ENCODE measurements at regions of chr11 and their contacts with region 1.

Region 1: DNA sequence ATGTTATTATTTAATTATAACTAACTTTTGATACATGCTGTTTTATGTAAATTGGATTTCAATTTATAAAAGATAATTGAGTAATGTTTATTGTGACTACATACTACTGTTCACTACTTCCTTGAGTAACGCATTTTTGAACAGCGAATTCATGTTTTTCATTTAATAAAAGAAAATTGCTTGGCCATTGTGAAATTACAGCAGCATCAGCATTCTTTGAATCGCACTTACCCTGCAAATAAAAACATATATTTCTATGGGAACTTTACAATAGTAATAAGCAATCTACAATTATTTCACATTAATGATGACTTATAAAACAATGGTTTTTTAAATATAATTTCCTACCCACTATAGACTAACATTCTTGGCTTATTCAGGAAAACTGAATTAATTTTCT is 20.3 kb downstream of the OR5J2 start:
- DNase-seq: no peak
- ATAC-seq: no peak
- H3K4me3 ChIP-seq: no peak overlapping the region
- H3K4me3 Mint-ChIP-seq: no peak overlapping the region
- H3K27ac ChIP-seq: no peak overlapping the region
- H3K27ac Mint-ChIP-seq: no peak overlapping the region
- H3K4me1 ChIP-seq: no peaks in the 10 kb centered on the region
- H3K4me1 Mint-ChIP-seq: no peaks in the 10 kb centered on the region
- H3K27me3 ChIP-seq: no peaks in the 10 kb centered on the region
- H3K27me3 Mint-ChIP-seq: no peaks in the 10 kb centered on the region
- CTCF ChIP-seq: no peak

Region 2: DNA sequence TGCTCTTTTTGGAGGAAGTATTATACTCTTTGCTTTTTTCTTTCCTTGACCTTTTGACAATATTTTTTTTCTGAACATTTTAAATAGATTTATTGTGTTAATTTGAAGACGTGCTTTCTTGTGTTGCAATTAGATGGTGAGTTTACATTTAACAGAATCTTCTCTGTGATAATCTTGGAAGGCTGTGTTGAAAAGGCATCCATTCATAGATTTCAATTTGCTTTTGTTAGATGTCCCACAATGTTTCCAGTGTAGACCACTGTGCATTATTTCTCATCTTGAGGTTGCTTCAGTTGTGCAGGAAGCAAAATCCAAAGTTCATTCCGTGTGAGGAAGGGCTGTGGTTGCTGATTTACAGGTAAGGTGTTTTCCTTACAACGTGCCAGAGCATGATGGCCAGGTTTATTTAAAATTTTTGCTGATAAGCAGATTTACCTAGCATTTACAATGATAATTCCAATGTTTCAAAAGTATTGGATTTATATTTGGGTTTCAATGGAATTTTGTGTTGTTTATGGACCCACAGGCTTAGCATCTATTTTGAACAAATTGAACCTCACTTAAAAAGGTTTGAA is 24.4 kb before region 1 on chr11:
- CTCF ChIA-PET with region 1: no interaction called
- POLR2A ChIA-PET with region 1: no interaction called
- intact Hi-C with region 1: loop called in 1 of 2 experiments (anchors 1 kb)
- DNase-seq: no peak
- ATAC-seq: no peak
- H3K4me3 ChIP-seq: no peak overlapping the region
- H3K4me3 Mint-ChIP-seq: no peak overlapping the region
- H3K27ac ChIP-seq: no peak overlapping the region
- H3K27ac Mint-ChIP-seq: no peak overlapping the region
- H3K4me1 ChIP-seq: no peaks in the 10 kb centered on the region
- H3K4me1 Mint-ChIP-seq: no peaks in the 10 kb centered on the region
- H3K27me3 ChIP-seq: no peaks in the 10 kb centered on the region
- H3K27me3 Mint-ChIP-seq: no peaks in the 10 kb centered on the region
- CTCF ChIP-seq: no peak

Measured in CD8-positive, alpha-beta T cell (primary cell).